ENCODE measurements at regions of chr5 and their contacts with region 1.

Region 1: DNA sequence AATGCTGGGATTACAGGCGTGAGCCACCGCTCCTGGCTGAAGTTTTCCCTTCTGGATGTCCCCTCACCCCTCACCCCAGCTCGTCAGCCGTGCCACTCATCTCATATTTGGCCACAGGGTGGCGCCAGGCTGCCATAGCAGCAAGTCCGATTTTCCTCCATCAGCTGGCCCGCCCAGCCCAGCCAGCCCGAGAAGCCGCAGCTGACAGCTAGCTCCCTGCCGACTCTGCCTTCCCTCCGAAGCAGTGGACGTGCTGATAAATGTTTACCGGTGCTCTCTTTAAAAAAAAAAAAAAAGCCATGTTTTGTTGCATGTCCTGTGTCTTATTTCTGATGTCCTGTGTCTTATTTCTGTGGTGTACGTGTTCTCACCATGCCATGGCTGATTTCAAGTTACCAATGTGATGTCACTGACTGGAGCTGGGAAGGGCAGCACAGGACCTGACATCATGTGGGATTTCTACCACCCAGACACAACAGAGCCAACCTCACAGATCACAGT is 58.3 kb downstream of the PFDN1 start:
- DNase-seq: peak; percentile 88
- H3K4me3 Mint-ChIP-seq: no peak overlapping the region
- H3K27ac Mint-ChIP-seq: no peak overlapping the region
- H3K4me1 Mint-ChIP-seq: peaks cover 23% of the 10 kb centered on the region
- H3K27me3 Mint-ChIP-seq: no peaks in the 10 kb centered on the region

Region 2: DNA sequence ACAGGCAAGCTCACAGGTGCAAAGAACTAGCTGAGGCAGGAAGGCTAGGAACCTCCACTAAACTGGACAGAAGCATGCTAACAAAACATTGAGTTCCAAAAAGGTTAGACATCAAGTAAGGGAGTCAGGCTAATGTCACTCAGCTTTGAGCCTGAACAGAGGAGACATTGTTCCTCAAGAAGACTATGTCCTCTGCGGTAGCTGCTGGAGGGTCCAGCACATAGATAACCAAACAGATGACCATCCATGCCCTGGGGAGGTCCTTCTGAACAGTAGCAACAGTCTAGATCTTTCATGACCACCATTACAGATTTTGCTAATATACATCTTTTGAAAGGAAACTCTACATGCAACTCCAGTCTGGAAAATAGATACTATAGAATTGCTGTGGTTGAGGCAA is 11.8 kb before region 1 on chr5:
- CTCF ChIA-PET with region 1: interaction called, 10 read pairs
- POLR2A ChIA-PET with region 1: no interaction called
- intact Hi-C with region 1: no loop called
- DNase-seq: no peak
- H3K4me3 Mint-ChIP-seq: no peak overlapping the region
- H3K27ac Mint-ChIP-seq: no peak overlapping the region
- H3K4me1 Mint-ChIP-seq: no peaks in the 10 kb centered on the region
- H3K27me3 Mint-ChIP-seq: no peaks in the 10 kb centered on the region

Region 3: DNA sequence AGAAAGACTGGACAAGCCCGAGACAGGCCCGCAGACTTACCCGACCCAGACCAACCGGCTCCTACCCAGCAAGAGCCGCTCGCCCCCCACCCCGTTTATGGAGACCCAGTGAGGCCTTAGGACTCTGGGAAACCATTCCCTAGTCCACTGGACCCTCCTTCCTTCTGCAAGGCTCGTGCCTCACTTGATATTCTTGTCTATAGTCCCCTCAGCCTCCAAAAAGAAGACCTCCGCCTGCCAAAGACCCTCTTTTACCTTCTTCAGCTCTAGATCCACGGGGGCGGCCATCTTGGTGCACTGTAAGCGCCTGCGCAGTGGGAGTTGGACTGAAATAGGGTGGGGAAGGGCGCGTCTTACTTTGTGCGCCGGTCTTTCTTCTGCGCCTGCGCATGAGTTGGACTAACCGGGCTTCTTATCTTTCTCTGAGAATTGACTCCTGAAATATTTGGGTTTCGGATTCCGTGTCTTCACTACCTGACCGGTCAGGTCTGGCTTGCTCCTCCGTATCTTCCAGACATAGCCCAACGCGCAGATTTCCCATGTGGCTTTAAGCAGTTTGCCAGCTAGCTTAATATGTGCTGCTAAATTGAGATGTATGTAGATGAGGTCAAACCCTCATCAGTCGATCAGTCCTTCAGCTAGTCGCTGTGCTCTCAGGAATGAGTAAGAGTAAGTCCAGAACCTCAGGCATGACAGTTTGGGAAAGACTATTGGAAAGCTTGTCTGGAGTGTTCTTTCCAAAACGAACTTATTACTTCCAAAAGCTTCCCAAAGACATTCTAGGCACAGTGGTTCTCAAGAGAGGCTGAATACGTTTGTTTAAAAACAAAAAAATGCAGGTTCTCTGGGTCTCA is 58.4 kb after region 1 on chr5 and contains the start of gene PFDN1:
- CTCF ChIA-PET with region 1: interaction called, 29 read pairs
- POLR2A ChIA-PET with region 1: no interaction called
- intact Hi-C with region 1: no loop called
- DNase-seq: peak; percentile 95
- H3K4me3 Mint-ChIP-seq: peak within 1 kb of the TSS; percentile 98
- H3K27ac Mint-ChIP-seq: peak within 1 kb of the TSS; percentile 85
- H3K4me1 Mint-ChIP-seq: peaks cover 26% of the 10 kb centered on the region
- H3K27me3 Mint-ChIP-seq: no peaks in the 10 kb centered on the region
- total RNA-seq, gene PFDN1: 50.1 to 54.6 TPM

Region 4: DNA sequence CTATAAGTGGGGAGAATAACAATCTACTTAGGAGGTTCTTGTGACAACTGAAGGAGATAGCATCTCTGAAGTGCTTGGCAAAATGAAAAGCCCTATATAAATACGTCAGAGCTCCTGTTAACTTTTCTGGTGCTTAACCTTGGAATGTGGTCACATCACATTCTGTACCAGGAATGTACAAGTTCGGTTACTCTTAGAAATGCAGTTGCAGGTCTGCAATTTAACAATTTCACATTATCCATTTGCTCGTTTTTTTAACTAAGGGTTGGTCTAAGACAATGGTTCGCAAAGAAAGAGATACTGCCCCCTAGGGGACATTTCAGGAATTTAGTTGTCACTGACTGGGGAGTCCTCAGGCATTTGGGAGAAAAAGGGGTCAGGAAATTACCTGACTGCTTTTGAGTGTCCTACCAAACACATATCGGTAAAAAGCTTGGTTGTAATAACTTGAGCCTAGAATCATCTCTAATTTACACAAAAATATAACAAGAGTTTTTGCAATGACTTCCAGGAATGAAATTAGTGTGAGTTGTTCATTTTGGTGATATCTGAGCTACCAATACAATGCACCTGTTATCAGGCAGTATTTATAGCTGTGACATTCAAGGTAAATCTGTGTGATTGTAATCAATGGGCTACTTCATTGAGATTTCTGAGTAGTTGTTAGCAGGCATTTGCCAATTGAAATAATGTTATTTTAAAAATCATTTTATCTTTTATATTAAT is 107.2 kb after region 1 on chr5:
- CTCF ChIA-PET with region 1: interaction called, 744 read pairs
- POLR2A ChIA-PET with region 1: interaction called, 3 read pairs
- intact Hi-C with region 1: loop called (anchors 1 kb)
- DNase-seq: peak; percentile 34
- H3K4me3 Mint-ChIP-seq: peak overlapping the region; percentile 23
- H3K27ac Mint-ChIP-seq: no peak overlapping the region
- H3K4me1 Mint-ChIP-seq: peaks cover 10% of the 10 kb centered on the region
- H3K27me3 Mint-ChIP-seq: peaks cover 1% of the 10 kb centered on the region

Region 5: GRCh38 chr5:140413230-140413629 is 168.7 kb after region 1 on chr5:
- CTCF ChIA-PET with region 1: no interaction called
- POLR2A ChIA-PET with region 1: no interaction called
- intact Hi-C with region 1: no loop called
- DNase-seq: no peak
- H3K4me3 Mint-ChIP-seq: no peak overlapping the region
- H3K27ac Mint-ChIP-seq: no peak overlapping the region
- H3K4me1 Mint-ChIP-seq: peaks cover 33% of the 10 kb centered on the region
- H3K27me3 Mint-ChIP-seq: no peaks in the 10 kb centered on the region

Region 6: GRCh38 chr5:140639148-140639979 is 394.8 kb after region 1 on chr5 and contains the start of gene TMCO6:
- CTCF ChIA-PET with region 1: no interaction called
- POLR2A ChIA-PET with region 1: interaction called, 3 read pairs
- intact Hi-C with region 1: loop called (anchors 5 kb)
- DNase-seq: peak; percentile 99
- H3K4me3 Mint-ChIP-seq: peak within 1 kb of the TSS; percentile 85
- H3K27ac Mint-ChIP-seq: peak within 1 kb of the TSS; percentile 94
- H3K4me1 Mint-ChIP-seq: peaks cover 41% of the 10 kb centered on the region
- H3K27me3 Mint-ChIP-seq: no peaks in the 10 kb centered on the region
- total RNA-seq, gene TMCO6: 33.7 to 33.8 TPM

Measured in activated CD4-positive, alpha-beta memory T cell treated with anti-CD3 and anti-CD28 coated beads for 36 hours (primary cell).